Panc1 (cell line): ENCODE measurements at regions of chr19 and their contacts with region 1.

Region 1: GRCh38 chr19:4120531-4120930 is 3.4 kb downstream of the MAP2K2 start:
- DNase-seq: no peak
- ATAC-seq: no peak
- H3K4me3 ChIP-seq: no peak overlapping the region
- H3K27ac ChIP-seq: no peak overlapping the region
- H3K4me1 ChIP-seq: peaks cover 12% of the 10 kb centered on the region; the same call in 1 of the 2 replicates
- H3K27me3 ChIP-seq: no peaks in the 10 kb centered on the region
- CTCF ChIP-seq: no peak

Region 2: GRCh38 chr19:3771906-3772455 is 348.6 kb before region 1 on chr19 and contains the start of gene RAX2:
- CTCF ChIA-PET with region 1: no interaction called
- POLR2A ChIA-PET with region 1: no interaction called
- in situ Hi-C with region 1: no loop called
- intact Hi-C with region 1: no loop called
- DNase-seq: no peak
- ATAC-seq: no peak
- H3K4me3 ChIP-seq: no peak within 1 kb of the TSS
- H3K27ac ChIP-seq: no peak within 1 kb of the TSS
- H3K4me1 ChIP-seq: no peaks in the 10 kb centered on the region
- H3K27me3 ChIP-seq: no peaks in the 10 kb centered on the region
- CTCF ChIP-seq: no peak
- total RNA-seq, gene RAX2: not detected

Region 3: GRCh38 chr19:4066682-4067395 is 53.7 kb before region 1 on chr19 and contains the start of gene ZBTB7A:
- CTCF ChIA-PET with region 1: no interaction called
- POLR2A ChIA-PET with region 1: interaction called, 15 read pairs
- in situ Hi-C with region 1: no loop called
- intact Hi-C with region 1: no loop called
- DNase-seq: no peak
- ATAC-seq: peak; percentile 40
- H3K4me3 ChIP-seq: peak within 1 kb of the TSS; percentile 55 to 59
- H3K27ac ChIP-seq: peak within 1 kb of the TSS; percentile 39; the same call in 1 of the 2 replicates
- H3K4me1 ChIP-seq: peaks cover 18% of the 10 kb centered on the region
- H3K27me3 ChIP-seq: no peaks in the 10 kb centered on the region
- CTCF ChIP-seq: no peak
- total RNA-seq, gene ZBTB7A: 48.0 TPM